GM13976 (cell line): ENCODE measurements at regions of chr13 and their contacts with region 1.

Region 1: DNA sequence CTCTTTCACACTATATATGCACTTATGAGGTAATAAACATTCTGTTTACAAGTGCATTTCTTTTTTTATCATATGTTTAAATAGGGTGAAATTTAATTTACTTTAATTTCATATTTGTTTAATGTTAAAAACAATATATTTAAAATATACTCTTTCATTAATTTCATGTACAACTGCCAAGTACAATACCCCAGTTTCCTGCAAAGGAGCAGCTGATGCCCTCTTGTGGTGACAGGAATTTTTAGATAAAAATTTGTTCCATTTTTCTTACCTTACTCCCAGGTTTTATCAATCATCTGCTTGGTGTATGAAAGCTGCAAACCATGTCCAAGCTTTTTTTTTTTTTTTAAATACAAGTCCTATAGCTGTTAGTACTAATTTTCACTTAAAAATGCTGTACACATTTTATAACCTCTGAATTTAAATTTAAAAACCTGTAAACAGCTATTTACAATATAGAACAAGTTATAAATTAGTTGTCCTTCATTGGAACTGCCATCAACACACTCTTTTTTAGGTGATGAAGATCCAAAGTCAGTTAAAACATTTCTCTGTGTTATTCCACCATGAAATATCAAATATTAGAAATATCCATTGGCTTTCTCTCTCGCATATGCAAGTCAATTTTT is 4.9 kb downstream of the PCDH20 start:
- DNase-seq: no peak
- CTCF ChIP-seq: no peak

Region 2: GRCh38 chr13:60453490-60453889 is 957.3 kb before region 1 on chr13:
- in situ Hi-C with region 1: loop called (anchors 25 kb)
- DNase-seq: no peak
- CTCF ChIP-seq: no peak